Right cardiac atrium (tissue), 5 donors: ENCODE measurements at regions of chr10 and their contacts with region 1.

Region 1: GRCh38 chr10:49001402-49001801 is 61.8 kb upstream of the LRRC18 start:
- DNase-seq: peak in 1 of 3 donors; percentile 66
- ATAC-seq: peak; percentile 71 to 86
- H3K4me3 ChIP-seq: no peak overlapping the region
- H3K27ac ChIP-seq: no peak overlapping the region
- H3K4me1 ChIP-seq: no peaks in the 10 kb centered on the region
- H3K27me3 ChIP-seq: no peaks in the 10 kb centered on the region

Region 2: DNA sequence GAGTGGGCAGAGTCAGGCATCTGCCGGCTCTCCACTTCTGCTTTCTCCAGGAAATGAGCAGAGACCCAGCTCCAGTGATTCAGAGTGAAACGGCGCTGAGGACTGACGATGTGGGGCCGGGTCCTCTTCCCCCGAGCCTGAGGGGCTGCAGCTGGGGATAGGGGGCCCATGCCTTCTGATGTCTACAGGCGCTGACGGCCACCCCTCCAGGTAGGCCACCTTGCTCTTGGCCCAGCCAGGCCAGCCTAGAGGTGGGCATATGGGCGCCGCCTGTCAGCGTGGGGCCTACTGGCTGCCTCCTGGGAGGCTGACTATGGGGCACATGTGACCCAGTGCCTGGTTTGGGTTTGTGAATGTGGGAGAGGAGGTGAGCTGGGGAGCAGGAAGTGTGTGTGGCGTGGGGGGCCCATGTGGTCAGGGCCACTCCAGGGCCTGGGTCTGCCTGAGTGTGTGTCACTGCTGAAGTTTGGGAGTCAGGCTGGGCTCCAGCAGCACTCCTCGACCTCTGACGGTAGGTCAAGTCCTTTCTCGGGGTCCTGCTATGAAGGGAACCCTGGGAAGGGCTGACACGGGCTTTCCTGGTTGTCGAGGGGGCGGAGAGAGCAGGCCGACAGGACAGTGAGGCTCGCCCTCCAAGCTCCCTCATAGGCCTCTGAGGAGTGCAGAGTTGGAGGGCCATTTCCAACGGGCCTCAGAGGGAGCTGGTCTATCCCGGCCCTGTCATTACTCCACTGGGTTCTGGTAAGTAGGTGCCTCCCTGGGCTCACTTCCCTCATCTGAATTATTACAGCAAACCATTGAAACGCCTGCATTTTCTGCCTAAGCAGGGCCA is 316.4 kb before region 1 on chr10 and contains the start of gene WDFY4:
- intact Hi-C with region 1: no loop called
- DNase-seq: peak in 2 of 3 donors; percentile 32 to 62
- ATAC-seq: peak; percentile 71 to 75
- H3K4me3 ChIP-seq: no peak within 1 kb of the TSS
- H3K27ac ChIP-seq: no peak within 1 kb of the TSS
- H3K4me1 ChIP-seq: no peaks in the 10 kb centered on the region
- H3K27me3 ChIP-seq: no peaks in the 10 kb centered on the region
- total RNA-seq, gene WDFY4: 1.4 to 4.4 (median 2.6) TPM

Region 3: GRCh38 chr10:49115015-49115795 is 113.8 kb after region 1 on chr10 and contains the start of gene VSTM4:
- intact Hi-C with region 1: loop called in 2 of 4 experiments (anchors 10 kb)
- DNase-seq: peak; percentile 60 to 89 (median 87)
- ATAC-seq: peak; percentile 64 to 65
- H3K4me3 ChIP-seq: peak within 1 kb of the TSS; percentile 83
- H3K27ac ChIP-seq: peak within 1 kb of the TSS; percentile 31
- H3K4me1 ChIP-seq: peaks cover 14% of the 10 kb centered on the region
- H3K27me3 ChIP-seq: no peaks in the 10 kb centered on the region
- total RNA-seq, gene VSTM4: 20.3 to 23.8 (median 22.1) TPM